Activated CD8-positive, alpha-beta T cell treated with anti-CD3 and anti-CD28 coated beads for 36 hours (primary cell): ENCODE measurements at regions of chr2 and their contacts with region 1.

Region 1: GRCh38 chr2:97995734-97996624 is at the start of gene TMEM131:
- DNase-seq: peak; percentile 95
- ATAC-seq: peak; percentile 85
- H3K4me3 Mint-ChIP-seq: peak within 1 kb of the TSS; percentile 93
- H3K27ac Mint-ChIP-seq: peak within 1 kb of the TSS; percentile 93
- H3K4me1 Mint-ChIP-seq: peaks cover 30% of the 10 kb centered on the region
- H3K27me3 Mint-ChIP-seq: no peaks in the 10 kb centered on the region
- CTCF ChIP-seq: no peak
- total RNA-seq, gene TMEM131: 24.2 to 27.4 TPM

Region 2: DNA sequence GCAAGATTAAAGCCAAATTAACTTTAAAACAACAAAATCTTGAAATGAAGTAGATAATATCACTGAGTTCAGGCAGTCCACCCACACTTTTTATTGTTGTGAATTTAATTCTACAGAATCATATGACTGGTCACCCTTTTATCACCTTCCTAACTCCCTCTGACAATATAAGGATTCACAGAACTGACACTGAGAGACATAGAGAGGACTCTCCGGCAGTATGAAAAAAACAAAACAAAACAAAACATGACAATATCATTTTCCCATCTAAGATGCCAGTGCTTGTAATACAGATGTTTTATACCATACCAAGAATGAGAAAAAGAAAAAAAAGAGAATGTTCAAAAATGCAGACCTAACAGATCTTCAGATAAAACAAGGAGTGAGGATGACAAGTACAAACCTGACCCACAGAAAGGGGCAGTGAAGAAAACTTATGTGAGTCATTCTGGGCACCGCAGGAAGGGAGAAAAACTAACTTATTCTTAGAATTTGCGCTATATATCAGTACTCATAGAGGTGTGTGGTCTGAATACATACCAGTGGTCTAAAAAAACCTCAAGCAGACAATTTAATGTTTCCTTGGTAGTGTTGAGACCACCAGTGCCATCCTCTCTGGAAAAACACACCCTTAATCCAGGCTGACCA is 146.0 kb before region 1 on chr2:
- CTCF ChIA-PET with region 1: no interaction called
- POLR2A ChIA-PET with region 1: no interaction called
- intact Hi-C with region 1: loop called (anchors 10 kb)
- DNase-seq: peak; percentile 44
- ATAC-seq: peak; percentile 90
- H3K4me3 Mint-ChIP-seq: no peak overlapping the region
- H3K27ac Mint-ChIP-seq: peak overlapping the region; percentile 17
- H3K4me1 Mint-ChIP-seq: peaks cover 46% of the 10 kb centered on the region
- H3K27me3 Mint-ChIP-seq: no peaks in the 10 kb centered on the region
- CTCF ChIP-seq: no peak

Region 3: DNA sequence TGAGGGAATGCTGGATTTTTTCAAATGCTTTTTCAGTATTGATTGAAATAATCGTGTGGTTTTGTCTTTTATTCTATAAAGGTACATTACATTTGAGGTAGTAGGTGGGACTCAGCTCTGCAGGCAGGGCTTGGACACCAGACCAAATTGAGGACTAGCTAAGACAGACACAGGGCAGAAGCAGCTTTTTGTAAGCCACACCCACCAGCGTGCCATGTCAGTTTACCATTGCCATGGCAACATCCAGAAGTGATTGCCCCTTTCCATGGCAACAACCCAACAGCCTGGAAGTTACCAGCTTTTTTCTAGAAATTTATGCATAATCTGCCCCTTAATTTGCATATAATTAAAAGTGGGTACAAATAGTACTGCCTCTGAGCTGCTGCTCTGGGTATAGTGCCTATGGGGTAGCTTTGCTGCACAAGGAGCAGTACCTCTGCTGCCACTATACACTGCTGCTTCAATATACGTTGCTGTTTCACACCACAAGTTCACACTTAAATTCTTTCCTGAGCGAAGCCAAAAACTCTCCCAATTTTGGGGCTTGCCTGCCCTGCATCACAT is 67.4 kb after region 1 on chr2:
- CTCF ChIA-PET with region 1: no interaction called
- POLR2A ChIA-PET with region 1: no interaction called
- intact Hi-C with region 1: no loop called
- DNase-seq: no peak
- ATAC-seq: no peak
- H3K4me3 Mint-ChIP-seq: no peak overlapping the region
- H3K27ac Mint-ChIP-seq: no peak overlapping the region
- H3K4me1 Mint-ChIP-seq: no peaks in the 10 kb centered on the region
- H3K27me3 Mint-ChIP-seq: peaks cover 14% of the 10 kb centered on the region
- CTCF ChIP-seq: no peak